ENCODE measurements at regions of chr5 and their contacts with region 1.

Region 1: GRCh38 chr5:80481019-80481893 is 6.6 kb upstream of the FAM151B start:
- DNase-seq: no peak
- H3K4me3 ChIP-seq: no peak overlapping the region
- H3K27ac ChIP-seq: no peak overlapping the region
- H3K27me3 ChIP-seq: no peaks in the 10 kb centered on the region
- CTCF ChIP-seq: peak; percentile 88

Region 2: GRCh38 chr5:80238778-80239679 is 242.2 kb before region 1 on chr5:
- CTCF ChIA-PET with region 1: no interaction called
- POLR2A ChIA-PET with region 1: no interaction called
- DNase-seq: no peak
- H3K4me3 ChIP-seq: no peak overlapping the region
- H3K27ac ChIP-seq: no peak overlapping the region
- H3K27me3 ChIP-seq: no peaks in the 10 kb centered on the region
- CTCF ChIP-seq: no peak

Region 3: DNA sequence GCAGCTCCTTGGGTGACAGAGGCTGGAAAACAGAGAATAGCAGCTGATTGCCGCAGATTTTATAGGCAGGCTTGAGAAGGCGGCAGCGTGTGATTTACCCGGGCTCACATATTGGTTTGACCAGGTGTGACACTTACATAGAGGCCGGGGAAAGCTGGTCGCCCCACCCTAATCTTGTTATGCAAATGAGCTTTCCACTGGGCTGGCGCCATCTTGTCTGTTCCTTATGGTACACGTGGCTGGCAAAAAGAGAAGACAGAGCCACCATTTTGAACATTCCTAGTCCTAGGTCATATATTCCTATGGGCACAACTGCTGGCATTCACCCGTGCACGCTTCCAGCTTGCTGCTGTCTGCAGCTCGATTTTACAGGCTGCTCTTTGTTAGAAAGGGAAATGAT is 172.7 kb before region 1 on chr5:
- CTCF ChIA-PET with region 1: no interaction called
- POLR2A ChIA-PET with region 1: no interaction called
- DNase-seq: no peak
- H3K4me3 ChIP-seq: no peak overlapping the region
- H3K27ac ChIP-seq: no peak overlapping the region
- H3K27me3 ChIP-seq: no peaks in the 10 kb centered on the region
- CTCF ChIP-seq: no peak

Region 4: GRCh38 chr5:80466669-80467485 is 14.4 kb before region 1 on chr5:
- CTCF ChIA-PET with region 1: interaction called, 14 read pairs
- POLR2A ChIA-PET with region 1: no interaction called
- DNase-seq: no peak
- H3K4me3 ChIP-seq: no peak overlapping the region
- H3K27ac ChIP-seq: no peak overlapping the region
- H3K27me3 ChIP-seq: no peaks in the 10 kb centered on the region
- CTCF ChIP-seq: no peak

Region 5: DNA sequence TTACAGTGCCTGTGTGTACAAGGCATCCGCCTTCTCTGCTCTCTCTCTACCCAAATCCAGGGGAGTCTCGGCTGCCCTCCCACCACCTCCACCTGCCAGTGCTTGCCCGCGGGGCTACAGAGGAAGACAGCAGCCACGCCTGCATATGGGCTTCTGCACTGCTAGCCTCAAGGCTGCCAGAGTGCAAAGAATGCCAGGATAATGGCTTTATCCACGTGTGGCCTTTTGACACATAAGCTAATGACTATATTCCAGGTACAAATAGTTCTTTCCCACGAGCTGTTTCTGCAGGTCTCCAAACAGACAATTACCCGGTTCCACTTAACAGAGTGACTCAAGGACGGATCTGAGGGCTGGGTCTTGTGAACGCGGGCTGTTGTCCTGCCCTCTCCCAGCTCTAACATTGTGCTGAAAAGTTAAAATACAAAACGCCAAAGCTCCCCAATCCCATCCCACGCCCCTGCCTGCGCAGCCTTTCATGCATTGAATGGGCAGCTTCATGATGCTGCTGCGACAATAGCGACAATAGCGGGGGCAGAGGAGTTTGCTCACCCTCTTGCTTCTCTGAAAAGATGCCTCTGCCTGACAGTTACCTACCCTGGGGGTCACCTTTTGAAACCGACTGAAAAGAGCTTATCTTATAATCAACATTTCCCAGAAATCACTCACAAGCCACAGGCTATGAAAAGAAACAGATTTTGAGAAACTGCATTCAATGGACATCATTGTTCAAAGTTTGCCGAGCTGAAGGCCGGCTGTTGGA is 134.1 kb after region 1 on chr5:
- CTCF ChIA-PET with region 1: no interaction called
- POLR2A ChIA-PET with region 1: no interaction called
- DNase-seq: no peak
- H3K4me3 ChIP-seq: no peak overlapping the region
- H3K27ac ChIP-seq: no peak overlapping the region
- H3K27me3 ChIP-seq: no peaks in the 10 kb centered on the region
- CTCF ChIP-seq: no peak

Region 6: GRCh38 chr5:80672140-80672736 is 191.0 kb after region 1 on chr5:
- CTCF ChIA-PET with region 1: interaction called, 75 read pairs
- POLR2A ChIA-PET with region 1: no interaction called
- DNase-seq: peak; percentile 24
- H3K4me3 ChIP-seq: no peak overlapping the region
- H3K27ac ChIP-seq: no peak overlapping the region
- H3K27me3 ChIP-seq: no peaks in the 10 kb centered on the region
- CTCF ChIP-seq: peak; percentile 89